ENCODE measurements at regions of chr2 and their contacts with region 1.

Region 1: DNA sequence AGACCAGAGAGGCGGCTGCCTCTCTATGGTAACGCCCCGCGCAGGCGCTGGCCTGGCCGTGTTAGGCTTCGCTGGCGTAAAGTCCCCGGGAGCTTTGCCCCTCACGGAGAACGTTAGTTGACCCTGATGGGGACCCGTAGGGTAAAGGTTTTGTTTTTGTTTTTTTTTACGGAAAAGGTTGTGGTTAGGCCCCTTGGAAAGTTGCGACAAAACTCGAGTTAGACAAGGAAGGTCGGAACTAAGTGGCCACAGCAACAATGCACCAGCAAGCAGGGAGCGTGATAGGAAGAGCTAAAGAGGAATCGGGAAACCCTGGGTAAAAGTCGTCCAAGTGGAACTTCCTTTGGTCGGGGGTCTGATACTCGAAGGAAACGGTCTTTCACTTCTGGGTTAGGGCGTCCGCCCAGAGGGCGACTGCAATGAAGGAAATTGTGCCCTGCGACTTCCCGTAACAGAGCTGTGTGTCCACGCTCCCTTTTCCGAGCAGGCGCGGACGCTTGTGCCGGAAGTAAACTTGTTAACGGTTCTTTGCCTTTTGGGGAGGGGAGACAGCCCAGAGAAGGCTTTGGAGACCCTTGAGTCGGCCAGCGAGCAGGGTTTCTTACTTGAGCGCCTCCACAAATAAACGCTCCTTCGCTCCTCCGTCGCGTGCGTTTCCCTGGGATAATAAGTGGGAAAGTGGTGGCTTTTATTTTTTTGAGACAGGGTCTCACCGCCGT is 493 bp upstream of the CLASP1 start:
- DNase-seq: peak; percentile 98
- ATAC-seq: peak; percentile 96
- H3K4me3 ChIP-seq: peak overlapping the region; percentile 71 to 96 (median 95)
- H3K27ac ChIP-seq: peak overlapping the region; percentile 99
- H3K4me1 ChIP-seq: peaks cover 53% of the 10 kb centered on the region
- H3K27me3 ChIP-seq: no peaks in the 10 kb centered on the region; a peak in 2 of 5 replicates
- CTCF ChIP-seq: no peak; the same call in 1 of the 2 replicates
- EP300 ChIP-seq: 0 out of 4 replicates have a peak, but pooled peaks have one; percentile 14 to 28
- POLR2A ChIP-seq: peak; percentile 66 to 92
- RAD21 ChIP-seq: peak; percentile 20; the same call in 1 of the 2 replicates

Region 2: GRCh38 chr2:121596221-121597080 is 53.3 kb before region 1 on chr2:
- CTCF ChIA-PET with region 1: no interaction called
- POLR2A ChIA-PET with region 1: interaction called, 20 read pairs
- in situ Hi-C with region 1: no loop called
- intact Hi-C with region 1: loop called (anchors 1 kb)
- DNase-seq: peak; percentile 67
- ATAC-seq: peak; percentile 46
- H3K4me3 ChIP-seq: no peak overlapping the region
- H3K27ac ChIP-seq: peak overlapping the region; percentile 32
- H3K4me1 ChIP-seq: peaks cover 44% of the 10 kb centered on the region
- H3K27me3 ChIP-seq: no peaks in the 10 kb centered on the region
- CTCF ChIP-seq: peak; percentile 72
- EP300 ChIP-seq: no peak
- POLR2A ChIP-seq: no peak
- RAD21 ChIP-seq: peak; percentile 38; the same call in 1 of the 2 replicates

Region 3: DNA sequence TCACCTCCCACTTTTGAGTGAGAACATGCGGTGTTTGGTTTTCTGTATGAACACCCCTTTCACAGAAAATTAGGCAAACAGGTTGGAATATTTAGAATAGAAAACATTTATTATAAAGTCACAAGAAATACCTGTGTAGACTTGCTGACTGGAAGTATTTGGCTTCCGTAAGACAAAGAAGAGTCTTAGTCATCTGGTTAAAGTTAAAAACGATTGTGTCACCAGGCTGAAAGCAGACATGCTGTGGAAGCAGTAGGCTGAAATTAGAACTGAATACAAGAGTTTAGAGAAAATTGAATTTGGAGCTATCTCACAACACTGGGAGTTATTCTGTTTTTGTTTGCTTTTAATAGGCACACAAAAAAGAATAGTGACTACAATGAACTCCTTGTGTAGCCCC is 15.7 kb after region 1 on chr2:
- CTCF ChIA-PET with region 1: no interaction called
- POLR2A ChIA-PET with region 1: interaction called, 36 read pairs
- in situ Hi-C with region 1: no loop called
- intact Hi-C with region 1: loop called (anchors 2 kb)
- DNase-seq: no peak
- ATAC-seq: peak; percentile 25; the same call in 1 of the 3 replicates
- H3K4me3 ChIP-seq: no peak overlapping the region
- H3K27ac ChIP-seq: no peak overlapping the region
- H3K4me1 ChIP-seq: peaks cover 16% of the 10 kb centered on the region
- H3K27me3 ChIP-seq: no peaks in the 10 kb centered on the region
- CTCF ChIP-seq: no peak
- EP300 ChIP-seq: no peak
- POLR2A ChIP-seq: no peak
- RAD21 ChIP-seq: no peak

Region 4: DNA sequence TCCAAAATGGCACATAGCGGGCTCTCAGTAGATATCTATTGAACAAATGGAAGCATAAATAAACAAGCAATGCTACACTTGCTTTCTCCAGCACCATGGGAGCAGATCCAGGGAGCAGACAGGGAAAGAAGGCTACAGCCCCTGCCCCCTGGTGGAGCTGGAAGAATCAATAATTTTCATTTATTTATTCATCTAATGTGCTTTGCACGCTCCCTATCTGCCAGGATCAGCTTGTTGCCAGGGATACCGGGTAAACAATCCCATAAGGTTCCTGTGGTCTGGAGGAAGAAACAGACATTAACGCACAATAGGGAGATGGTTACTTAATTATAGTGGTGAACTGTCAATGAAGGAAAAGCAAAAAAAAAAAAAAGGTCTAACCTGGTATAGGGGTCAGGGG is 39.6 kb after region 1 on chr2:
- CTCF ChIA-PET with region 1: no interaction called
- POLR2A ChIA-PET with region 1: interaction called, 8 read pairs
- in situ Hi-C with region 1: no loop called
- intact Hi-C with region 1: loop called (anchors 5 kb)
- DNase-seq: peak; percentile 69
- ATAC-seq: peak; percentile 89
- H3K4me3 ChIP-seq: no peak overlapping the region
- H3K27ac ChIP-seq: no peak overlapping the region
- H3K4me1 ChIP-seq: peaks cover 33% of the 10 kb centered on the region
- H3K27me3 ChIP-seq: no peaks in the 10 kb centered on the region
- CTCF ChIP-seq: peak; percentile 59
- EP300 ChIP-seq: no peak
- POLR2A ChIP-seq: no peak
- RAD21 ChIP-seq: peak; percentile 59; the same call in 1 of the 2 replicates

Region 5: GRCh38 chr2:121707920-121708361 is 58.2 kb after region 1 on chr2:
- CTCF ChIA-PET with region 1: no interaction called
- POLR2A ChIA-PET with region 1: interaction called, 27 read pairs
- in situ Hi-C with region 1: no loop called
- intact Hi-C with region 1: loop called (anchors 5 kb)
- DNase-seq: peak; percentile 43
- ATAC-seq: peak; percentile 87
- H3K4me3 ChIP-seq: peak overlapping the region; percentile 51 to 70 (median 51)
- H3K27ac ChIP-seq: peak overlapping the region; percentile 11
- H3K4me1 ChIP-seq: peaks cover 56% of the 10 kb centered on the region
- H3K27me3 ChIP-seq: peaks cover 0 to 16% of the 10 kb centered on the region in 2 experiments; a peak in 2 of 5 replicates
- CTCF ChIP-seq: no peak
- EP300 ChIP-seq: no peak
- POLR2A ChIP-seq: no peak
- RAD21 ChIP-seq: no peak